Breast epithelium (tissue), 4 donors: ENCODE measurements at regions of chr3 and their contacts with region 1.

Region 1: DNA sequence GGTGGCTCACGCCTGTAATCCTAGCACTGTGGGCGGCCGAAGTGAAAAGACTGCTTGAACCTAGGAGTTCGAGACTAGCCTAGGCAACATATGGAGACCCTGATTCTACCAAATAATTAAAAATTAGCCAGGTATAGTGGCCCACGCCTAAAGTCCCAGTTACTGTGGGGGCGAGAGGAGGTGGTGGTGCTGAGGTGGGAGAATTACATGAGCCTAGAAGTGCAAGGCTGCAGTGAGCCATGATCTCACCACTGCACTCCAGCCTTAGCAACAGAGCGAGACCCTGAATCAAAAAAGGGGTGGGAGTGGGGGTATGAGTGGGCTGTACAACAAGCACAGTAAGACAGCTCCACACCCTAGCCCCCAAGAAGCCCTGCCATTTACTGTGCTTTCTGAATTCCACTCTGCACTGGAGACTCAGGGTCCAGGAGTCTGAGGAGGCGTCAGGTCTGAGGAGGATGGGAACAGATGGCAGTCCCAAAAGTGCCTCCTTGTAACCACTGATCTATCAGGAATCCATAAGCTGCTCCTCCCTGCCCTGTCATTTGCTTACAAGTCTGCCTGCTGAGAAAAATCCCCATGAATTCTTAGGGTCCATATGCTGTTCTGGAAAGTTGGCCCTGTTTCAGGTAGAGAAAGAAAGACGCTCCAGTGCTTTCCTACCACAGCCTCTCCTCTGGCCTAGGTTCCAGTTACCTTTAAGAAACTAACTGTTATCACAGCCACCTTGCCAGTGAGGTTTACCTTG is 171.1 kb downstream of the MAGI1 start:
- DNase-seq: no peak
- H3K4me3 ChIP-seq: no peak overlapping the region
- H3K27ac ChIP-seq: no peak overlapping the region
- H3K4me1 ChIP-seq: peaks cover 0 to 6% of the 10 kb centered on the region in 2 donors
- H3K27me3 ChIP-seq: no peaks in the 10 kb centered on the region
- CTCF ChIP-seq: no peak
- POLR2A ChIP-seq: no peak

Region 2: GRCh38 chr3:65685621-65686235 is 181.9 kb before region 1 on chr3:
- intact Hi-C with region 1: loop called (anchors 5 kb)
- DNase-seq: no peak
- H3K4me3 ChIP-seq: no peak overlapping the region
- H3K27ac ChIP-seq: no peak overlapping the region
- H3K4me1 ChIP-seq: no peaks in the 10 kb centered on the region
- H3K27me3 ChIP-seq: no peaks in the 10 kb centered on the region
- CTCF ChIP-seq: no peak
- POLR2A ChIP-seq: no peak

Region 3: GRCh38 chr3:66121318-66121717 is 253.7 kb after region 1 on chr3:
- intact Hi-C with region 1: no loop called
- DNase-seq: no peak
- H3K4me3 ChIP-seq: no peak overlapping the region
- H3K27ac ChIP-seq: no peak overlapping the region
- H3K4me1 ChIP-seq: no peaks in the 10 kb centered on the region
- H3K27me3 ChIP-seq: no peaks in the 10 kb centered on the region
- CTCF ChIP-seq: no peak
- POLR2A ChIP-seq: no peak